ENCODE measurements at regions of chr1 and their contacts with region 1.

Region 1: GRCh38 chr1:32716312-32717148 is 14.0 kb upstream of the SYNC start:
- DNase-seq: peak; percentile 72
- ATAC-seq: peak; percentile 63
- H3K4me3 Mint-ChIP-seq: no peak overlapping the region
- H3K27ac Mint-ChIP-seq: no peak overlapping the region
- H3K4me1 Mint-ChIP-seq: peaks cover 8% of the 10 kb centered on the region
- H3K27me3 Mint-ChIP-seq: peaks cover 5% of the 10 kb centered on the region

Region 2: GRCh38 chr1:32639489-32640075 is 76.9 kb before region 1 on chr1:
- CTCF ChIA-PET with region 1: no interaction called
- DNase-seq: no peak
- ATAC-seq: no peak
- H3K4me3 Mint-ChIP-seq: no peak overlapping the region
- H3K27ac Mint-ChIP-seq: no peak overlapping the region
- H3K4me1 Mint-ChIP-seq: peaks cover 5% of the 10 kb centered on the region
- H3K27me3 Mint-ChIP-seq: no peaks in the 10 kb centered on the region

Region 3: DNA sequence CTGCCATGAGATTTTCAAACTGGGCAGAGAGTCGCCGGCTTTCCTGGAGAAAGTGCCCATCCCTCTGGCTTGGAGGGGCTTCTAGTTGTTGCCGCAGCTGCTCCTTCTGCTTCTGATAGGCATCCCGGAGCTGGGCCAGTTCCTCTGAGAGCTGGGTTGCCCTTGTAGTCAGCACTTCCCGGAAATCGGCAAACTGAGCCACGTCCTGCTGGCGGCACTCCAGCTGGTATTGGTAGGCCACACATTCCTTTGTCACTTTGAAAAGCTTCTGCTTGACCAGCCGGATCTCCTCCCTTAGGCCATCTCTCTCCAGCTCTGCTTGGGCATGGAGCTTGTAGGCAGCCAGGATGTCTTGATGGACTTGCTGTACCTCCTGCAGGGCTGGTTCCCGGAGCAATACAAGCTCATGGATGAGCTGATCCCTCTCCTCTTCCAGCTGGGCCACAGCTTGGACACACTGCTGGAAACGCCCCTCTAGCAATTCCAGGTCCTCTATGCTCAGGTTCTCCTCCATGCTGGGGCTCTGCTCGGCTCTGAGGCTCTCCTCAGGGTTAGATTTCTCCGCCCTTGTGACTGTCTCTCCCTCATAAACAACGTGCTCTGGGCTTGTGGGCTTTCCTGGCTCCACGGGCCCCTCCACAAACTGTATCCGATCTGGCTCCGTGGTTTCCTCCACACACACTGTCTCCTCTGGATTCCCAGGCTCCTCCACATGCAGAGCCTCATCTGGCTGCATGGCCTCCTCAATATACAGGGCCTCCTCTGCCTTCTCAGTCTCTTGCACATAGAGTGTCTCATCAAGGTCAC is 21.2 kb before region 1 on chr1:
- CTCF ChIA-PET with region 1: interaction called, 10 read pairs
- DNase-seq: no peak
- ATAC-seq: no peak
- H3K4me3 Mint-ChIP-seq: no peak overlapping the region
- H3K27ac Mint-ChIP-seq: no peak overlapping the region
- H3K4me1 Mint-ChIP-seq: peaks cover 7% of the 10 kb centered on the region
- H3K27me3 Mint-ChIP-seq: peaks cover 12% of the 10 kb centered on the region

Region 4: DNA sequence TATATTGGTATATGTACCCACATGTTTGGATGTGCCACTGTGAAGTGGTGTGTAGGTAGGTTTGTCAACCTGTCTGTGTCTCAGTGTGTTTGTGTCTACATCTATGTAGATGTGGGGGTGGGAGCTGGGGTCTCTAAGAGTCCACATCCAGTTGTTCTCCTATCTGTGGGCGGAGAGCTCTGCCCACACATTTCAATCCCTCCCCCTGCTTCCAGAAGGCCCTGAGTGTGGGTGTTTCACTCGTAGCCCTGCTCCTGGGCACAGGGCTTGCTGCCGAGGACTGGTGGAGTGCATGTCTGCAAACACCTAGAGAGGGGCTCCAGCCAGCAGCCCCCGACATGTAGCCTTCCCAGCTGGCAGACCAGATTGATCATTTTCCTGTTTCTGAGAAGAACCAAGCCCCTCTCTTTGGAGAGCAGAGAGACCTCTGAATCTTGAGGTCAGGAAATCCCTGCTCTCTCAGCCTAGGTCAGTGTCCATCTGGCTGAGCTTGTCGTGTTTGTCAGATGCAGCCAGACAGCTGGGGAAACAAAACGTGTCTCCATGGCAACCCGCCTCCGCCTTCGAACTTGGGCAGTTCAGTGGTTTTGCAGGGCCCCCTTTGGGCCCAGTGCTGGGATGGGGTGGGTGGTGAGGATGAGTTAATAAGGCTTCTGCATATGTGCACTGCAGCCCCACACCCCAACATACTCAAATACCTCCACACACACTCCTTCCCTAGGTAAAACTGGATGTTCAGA is 17.2 kb after region 1 on chr1:
- CTCF ChIA-PET with region 1: interaction called, 13 read pairs
- DNase-seq: no peak
- ATAC-seq: no peak
- H3K4me3 Mint-ChIP-seq: no peak overlapping the region
- H3K27ac Mint-ChIP-seq: no peak overlapping the region
- H3K4me1 Mint-ChIP-seq: peaks cover 6% of the 10 kb centered on the region
- H3K27me3 Mint-ChIP-seq: peaks cover 8% of the 10 kb centered on the region

Region 5: DNA sequence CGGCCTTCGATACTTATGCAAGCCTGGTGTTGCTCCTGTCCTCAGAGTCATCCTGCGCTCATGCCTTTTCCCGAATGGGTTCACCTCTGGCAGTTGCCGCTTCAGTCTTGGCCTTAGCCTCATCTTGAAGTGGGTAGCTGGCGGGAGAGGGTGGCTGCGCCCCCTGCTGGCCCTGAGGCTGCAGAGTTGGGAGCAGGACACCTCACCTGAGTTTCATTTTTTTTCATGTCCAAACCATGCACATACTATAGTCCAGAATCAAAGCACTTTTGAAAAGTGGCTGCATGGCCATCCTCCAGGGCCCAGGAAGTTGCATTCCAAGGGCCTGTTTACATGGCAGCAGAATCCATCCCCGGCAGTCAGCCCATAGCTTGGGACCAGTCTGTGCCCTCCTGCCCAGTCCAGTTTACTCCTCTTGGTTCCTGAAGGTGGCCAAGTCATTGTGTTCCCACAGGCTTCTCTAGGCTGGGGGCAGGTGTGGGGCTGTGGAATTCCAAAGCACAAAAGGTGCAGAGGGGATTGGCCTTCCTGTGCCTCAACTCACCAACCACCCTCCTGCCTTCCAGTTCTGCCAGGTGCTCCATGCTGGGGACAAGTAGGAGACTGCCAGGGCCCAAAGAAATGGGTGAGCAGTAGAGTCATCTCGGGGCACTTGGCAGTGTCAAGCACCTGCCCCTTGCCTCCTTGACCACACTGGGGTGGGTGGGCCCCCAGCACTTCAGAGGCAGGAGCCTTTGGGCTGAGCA is 56.7 kb after region 1 on chr1:
- CTCF ChIA-PET with region 1: interaction called, 153 read pairs
- DNase-seq: peak; percentile 82
- ATAC-seq: peak; percentile 81
- H3K4me3 Mint-ChIP-seq: no peak overlapping the region
- H3K27ac Mint-ChIP-seq: peak overlapping the region; percentile 21
- H3K4me1 Mint-ChIP-seq: peaks cover 9% of the 10 kb centered on the region
- H3K27me3 Mint-ChIP-seq: no peaks in the 10 kb centered on the region

Region 6: DNA sequence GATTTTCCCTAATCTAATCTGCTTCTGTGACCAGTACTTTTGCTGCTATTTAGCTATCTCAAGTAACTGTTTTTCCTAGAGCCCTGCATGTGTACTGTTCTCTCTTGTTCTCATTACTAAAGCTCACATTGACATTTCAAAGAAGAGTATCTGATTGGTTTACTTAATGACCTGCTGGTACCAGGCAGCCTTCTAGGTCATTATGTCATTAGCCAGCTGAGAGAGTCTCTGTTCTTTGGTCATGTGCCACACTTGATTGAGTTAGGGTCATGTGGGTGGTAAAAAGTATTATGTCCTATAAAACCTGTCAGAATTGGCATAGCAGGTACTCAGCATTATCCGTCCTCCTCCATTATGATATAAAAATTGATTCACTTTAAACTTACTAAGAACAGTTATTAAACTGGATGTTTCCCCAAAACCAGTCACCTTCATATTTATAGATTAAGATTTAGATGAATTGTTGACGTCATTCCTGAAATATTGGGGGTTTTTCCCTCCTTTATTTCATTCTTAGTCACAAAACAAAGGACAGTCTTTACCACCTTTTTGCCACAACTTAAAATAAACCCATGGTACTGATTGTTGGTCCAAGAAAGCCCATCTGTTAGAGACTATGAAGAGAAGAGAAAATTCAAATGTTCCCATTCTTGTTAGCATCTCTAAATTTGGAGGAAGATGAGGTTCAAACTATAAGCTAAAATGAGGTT is 132.0 kb after region 1 on chr1:
- CTCF ChIA-PET with region 1: interaction called, 10 read pairs
- DNase-seq: no peak
- ATAC-seq: no peak
- H3K4me3 Mint-ChIP-seq: no peak overlapping the region
- H3K27ac Mint-ChIP-seq: no peak overlapping the region
- H3K4me1 Mint-ChIP-seq: peaks cover 5% of the 10 kb centered on the region
- H3K27me3 Mint-ChIP-seq: no peaks in the 10 kb centered on the region

Region 7: GRCh38 chr1:32939655-32940371 is 223.3 kb after region 1 on chr1:
- CTCF ChIA-PET with region 1: no interaction called
- DNase-seq: peak; percentile 59
- ATAC-seq: peak; percentile 69
- H3K4me3 Mint-ChIP-seq: peak overlapping the region; percentile 39
- H3K27ac Mint-ChIP-seq: peak overlapping the region; percentile 80
- H3K4me1 Mint-ChIP-seq: peaks cover 57% of the 10 kb centered on the region
- H3K27me3 Mint-ChIP-seq: no peaks in the 10 kb centered on the region